Dorsolateral prefrontal cortex (tissue), 120 donors: ENCODE measurements at regions of chr3 and their contacts with region 1.

Region 1: DNA sequence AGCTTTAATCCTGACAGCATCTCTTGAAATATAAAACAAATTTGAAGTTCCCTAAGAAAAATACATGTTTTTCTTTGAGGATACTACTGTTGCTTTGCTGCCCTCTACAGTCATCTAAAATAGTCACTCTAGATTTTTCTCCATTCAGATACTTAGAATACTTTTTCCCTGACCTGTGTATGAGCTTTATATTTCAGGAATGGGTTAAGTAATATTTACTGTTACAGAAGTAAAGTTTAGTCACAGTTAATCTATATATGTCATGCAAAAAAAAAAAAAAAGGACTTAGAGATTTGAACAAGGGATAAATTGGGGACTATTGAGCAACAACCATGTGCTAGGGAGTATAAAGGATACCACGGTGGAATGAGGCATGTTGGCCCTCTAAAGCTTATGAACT is 8.8 kb downstream of the NECTIN3 start:
- DNase-seq: no peak
- H3K4me3 ChIP-seq: peak overlapping the region in 1 of 59 donors; percentile 3
- H3K27ac ChIP-seq: no peak overlapping the region
- H3K27me3 ChIP-seq: no peaks in the 10 kb centered on the region
- CTCF ChIP-seq: peak; percentile 38 to 83 (median 63)

Region 2: DNA sequence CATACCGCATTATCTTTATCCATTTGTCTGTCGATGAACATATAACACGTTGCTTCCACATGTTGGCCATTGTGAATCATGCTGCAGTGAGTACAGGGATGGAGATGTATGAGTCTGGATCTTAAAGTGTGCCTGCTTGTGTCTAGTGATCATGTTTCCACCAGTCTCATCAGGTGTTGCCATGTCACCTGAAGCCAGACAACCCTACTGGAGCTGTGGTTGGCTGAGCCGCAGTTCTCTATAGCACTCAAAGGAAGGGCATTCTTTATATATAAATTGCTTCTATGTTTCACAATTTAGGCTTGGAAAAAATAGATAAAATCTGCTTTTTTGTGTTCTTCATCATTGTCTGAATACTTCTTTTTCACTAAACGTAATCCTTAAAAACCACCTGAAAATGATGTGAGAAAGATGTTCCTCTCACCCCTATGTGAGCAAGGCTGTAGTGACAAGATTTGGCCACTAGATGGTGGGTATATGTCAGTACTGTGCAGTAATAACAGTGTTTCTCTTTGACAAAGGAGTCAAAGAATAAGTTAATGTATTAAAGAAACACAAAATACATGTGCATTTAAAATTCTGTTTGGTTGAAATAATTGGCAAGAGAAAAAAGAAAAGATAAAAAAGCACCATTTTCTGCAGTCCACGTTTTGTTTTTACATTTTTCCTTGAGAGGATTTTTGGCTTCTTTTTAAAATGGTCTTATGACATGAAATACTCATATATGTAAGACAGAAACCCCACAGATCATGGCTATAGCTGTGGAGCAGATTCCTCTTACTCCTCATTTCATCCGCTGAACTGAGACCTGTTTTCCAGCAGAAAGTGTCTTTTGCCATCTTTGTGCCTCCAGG is 1348.6 kb before region 1 on chr3:
- intact Hi-C with region 1: loop called in 1 of 2 experiments (anchors 10 kb)
- DNase-seq: peak in 4 of 10 donors; percentile 5 to 46 (median 32)
- H3K4me3 ChIP-seq: no peak overlapping the region
- H3K27ac ChIP-seq: no peak overlapping the region
- H3K27me3 ChIP-seq: no peaks in the 10 kb centered on the region
- CTCF ChIP-seq: peak; percentile 64 to 93 (median 86)

Region 3: DNA sequence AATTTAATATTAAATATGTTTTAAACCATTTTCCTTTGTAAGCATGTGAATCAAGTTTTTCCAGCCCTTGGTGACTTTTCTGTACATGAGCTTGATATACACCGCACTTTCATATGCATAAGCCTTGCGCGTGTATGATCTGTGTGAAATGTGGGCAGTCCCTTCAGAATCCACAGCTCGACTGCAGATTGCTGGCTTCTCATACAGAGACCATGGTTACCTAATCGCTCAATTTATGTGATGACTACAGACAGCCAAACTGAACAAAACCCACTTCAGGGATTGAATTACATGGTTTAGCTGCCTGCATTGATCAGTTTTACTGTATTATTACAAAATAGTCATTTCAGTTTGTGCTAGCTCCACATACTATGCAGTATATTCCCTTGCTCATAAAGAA is 221.1 kb before region 1 on chr3:
- intact Hi-C with region 1: loop called in 1 of 2 experiments (anchors 5 kb)
- DNase-seq: no peak
- H3K4me3 ChIP-seq: no peak overlapping the region
- H3K27ac ChIP-seq: no peak overlapping the region
- H3K27me3 ChIP-seq: no peaks in the 10 kb centered on the region
- CTCF ChIP-seq: no peak